HepG2 (cell line): ENCODE measurements at regions of chr5 and their contacts with region 1.

Region 1: DNA sequence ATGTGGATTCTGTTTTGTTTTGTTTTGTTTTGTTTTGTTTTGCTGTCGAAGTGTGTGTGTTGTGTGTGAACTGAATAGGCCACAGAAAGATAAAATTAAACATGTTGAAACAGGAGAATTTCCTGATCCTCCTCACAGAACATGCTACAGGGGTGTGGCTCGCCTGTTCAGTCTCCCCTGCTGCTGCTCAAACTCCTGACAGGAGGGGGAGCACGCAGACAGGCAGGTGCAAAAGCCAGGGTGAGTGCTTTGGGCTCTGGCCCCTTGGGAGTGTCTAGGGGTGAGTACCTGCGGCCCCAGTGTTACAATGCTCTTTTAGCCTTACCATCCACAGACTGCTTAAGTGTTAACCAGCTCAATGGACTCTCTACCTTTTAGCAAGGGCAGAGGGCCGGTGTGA is 473.5 kb downstream of the MAT2B start:
- DNase-seq: no peak
- ATAC-seq: peak; percentile 78
- H3K4me3 ChIP-seq: no peak overlapping the region
- H3K27ac ChIP-seq: no peak overlapping the region
- H3K4me1 ChIP-seq: no peaks in the 10 kb centered on the region
- H3K27me3 ChIP-seq: no peaks in the 10 kb centered on the region
- CTCF ChIP-seq: peak; percentile 48
- EP300 ChIP-seq: no peak
- POLR2A ChIP-seq: no peak
- RAD21 ChIP-seq: no peak

Region 2: GRCh38 chr5:164052536-164053093 is 73.7 kb after region 1 on chr5:
- CTCF ChIA-PET with region 1: no interaction called
- POLR2A ChIA-PET with region 1: no interaction called
- in situ Hi-C with region 1: no loop called
- intact Hi-C with region 1: loop called (anchors 5 kb)
- DNase-seq: no peak
- ATAC-seq: no peak
- H3K4me3 ChIP-seq: no peak overlapping the region
- H3K27ac ChIP-seq: no peak overlapping the region
- H3K4me1 ChIP-seq: no peaks in the 10 kb centered on the region
- H3K27me3 ChIP-seq: no peaks in the 10 kb centered on the region
- CTCF ChIP-seq: no peak
- EP300 ChIP-seq: no peak
- POLR2A ChIP-seq: no peak
- RAD21 ChIP-seq: no peak